ENCODE measurements at regions of chr19 and their contacts with region 1.

Region 1: DNA sequence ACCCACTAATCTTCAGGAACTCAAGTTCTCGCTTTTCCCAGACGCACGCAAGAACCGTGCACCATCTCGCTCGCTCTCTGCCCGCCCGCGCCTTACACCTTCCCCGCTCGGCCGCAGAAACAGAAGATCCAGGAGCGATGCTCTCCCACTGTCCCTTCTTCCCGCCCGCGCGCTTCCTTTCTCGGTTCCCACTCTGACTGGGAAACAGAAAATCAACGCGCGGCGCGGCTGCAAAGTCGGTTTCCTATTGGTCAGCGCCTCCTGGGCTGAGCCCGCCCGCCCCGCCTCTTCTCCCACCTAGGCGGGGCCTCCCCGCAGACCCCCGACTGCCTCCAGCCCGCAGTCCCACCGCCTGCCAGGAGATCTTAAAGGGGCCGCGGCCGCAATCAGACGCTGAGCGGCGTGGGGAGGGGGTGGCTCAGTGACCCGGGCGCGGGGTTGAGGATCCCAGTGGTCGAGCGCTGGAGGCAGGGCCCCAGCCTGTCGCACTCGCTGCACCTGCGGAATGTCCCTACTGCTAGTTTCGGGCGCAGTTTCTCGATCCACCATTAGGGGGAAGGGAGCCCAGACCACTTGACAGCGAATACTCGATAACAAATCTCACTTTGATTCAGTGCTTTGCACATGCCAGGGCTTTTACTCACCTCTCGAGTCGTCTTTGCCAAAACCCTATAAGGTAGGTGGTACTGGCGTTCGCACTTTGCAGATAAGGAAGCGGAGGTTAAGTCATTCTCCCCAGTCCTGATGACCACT is 685 bp upstream of the SLC25A23 start:
- DNase-seq: peak; percentile 97
- H3K4me3 ChIP-seq: peak overlapping the region; percentile 70 to 85 (median 78)
- H3K27ac ChIP-seq: peak overlapping the region; percentile 83 to 93 (median 88)
- H3K4me1 ChIP-seq: peaks cover 0 to 31% (median 22%) of the 10 kb centered on the region in 4 donors
- H3K27me3 ChIP-seq: peaks cover 10 to 25% (median 18%) of the 10 kb centered on the region in 3 donors
- CTCF ChIP-seq: peak; percentile 45 to 81 (median 72)
- EP300 ChIP-seq: no peak
- POLR2A ChIP-seq: peak in 1 of 2 donors; percentile 22

Region 2: DNA sequence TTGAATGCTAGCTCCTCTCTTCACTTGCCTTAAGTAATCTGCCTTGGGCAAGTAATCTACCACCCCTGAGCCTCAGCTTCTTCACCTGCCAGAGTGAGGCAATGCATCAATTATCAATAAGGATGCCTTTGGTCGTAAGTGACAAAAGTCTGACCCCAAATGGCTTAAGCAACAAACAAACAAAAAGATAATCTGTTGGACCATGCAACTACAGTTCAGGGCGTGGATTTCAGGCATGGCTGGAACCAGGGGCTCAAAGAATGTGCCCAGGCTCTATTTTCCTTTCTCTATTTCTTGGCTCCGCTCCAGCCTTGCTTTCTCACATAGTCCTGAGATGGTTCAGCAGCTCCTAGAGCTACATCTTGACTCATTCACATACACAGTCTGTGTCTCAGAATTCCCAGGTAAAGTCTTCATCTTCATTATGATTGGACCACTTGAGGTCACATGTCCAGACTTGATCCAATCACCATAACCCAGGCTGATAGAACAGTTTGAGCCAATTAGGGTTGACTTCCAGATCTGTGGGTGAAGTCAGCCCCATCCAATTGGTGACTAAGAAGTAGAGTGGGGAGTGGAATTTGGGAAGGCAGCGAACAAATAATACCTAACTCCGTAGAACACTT is 295.3 kb before region 1 on chr19:
- intact Hi-C with region 1: no loop called
- DNase-seq: no peak
- H3K4me3 ChIP-seq: no peak overlapping the region
- H3K27ac ChIP-seq: no peak overlapping the region
- H3K4me1 ChIP-seq: no peaks in the 10 kb centered on the region
- H3K27me3 ChIP-seq: no peaks in the 10 kb centered on the region
- CTCF ChIP-seq: no peak
- EP300 ChIP-seq: no peak
- POLR2A ChIP-seq: no peak

Region 3: GRCh38 chr19:6318772-6319171 is 141.5 kb before region 1 on chr19:
- intact Hi-C with region 1: no loop called
- DNase-seq: no peak
- H3K4me3 ChIP-seq: no peak overlapping the region
- H3K27ac ChIP-seq: no peak overlapping the region
- H3K4me1 ChIP-seq: no peaks in the 10 kb centered on the region
- H3K27me3 ChIP-seq: peaks cover 0 to 23% (median 4%) of the 10 kb centered on the region in 3 donors
- CTCF ChIP-seq: no peak
- EP300 ChIP-seq: no peak
- POLR2A ChIP-seq: no peak

Region 4: DNA sequence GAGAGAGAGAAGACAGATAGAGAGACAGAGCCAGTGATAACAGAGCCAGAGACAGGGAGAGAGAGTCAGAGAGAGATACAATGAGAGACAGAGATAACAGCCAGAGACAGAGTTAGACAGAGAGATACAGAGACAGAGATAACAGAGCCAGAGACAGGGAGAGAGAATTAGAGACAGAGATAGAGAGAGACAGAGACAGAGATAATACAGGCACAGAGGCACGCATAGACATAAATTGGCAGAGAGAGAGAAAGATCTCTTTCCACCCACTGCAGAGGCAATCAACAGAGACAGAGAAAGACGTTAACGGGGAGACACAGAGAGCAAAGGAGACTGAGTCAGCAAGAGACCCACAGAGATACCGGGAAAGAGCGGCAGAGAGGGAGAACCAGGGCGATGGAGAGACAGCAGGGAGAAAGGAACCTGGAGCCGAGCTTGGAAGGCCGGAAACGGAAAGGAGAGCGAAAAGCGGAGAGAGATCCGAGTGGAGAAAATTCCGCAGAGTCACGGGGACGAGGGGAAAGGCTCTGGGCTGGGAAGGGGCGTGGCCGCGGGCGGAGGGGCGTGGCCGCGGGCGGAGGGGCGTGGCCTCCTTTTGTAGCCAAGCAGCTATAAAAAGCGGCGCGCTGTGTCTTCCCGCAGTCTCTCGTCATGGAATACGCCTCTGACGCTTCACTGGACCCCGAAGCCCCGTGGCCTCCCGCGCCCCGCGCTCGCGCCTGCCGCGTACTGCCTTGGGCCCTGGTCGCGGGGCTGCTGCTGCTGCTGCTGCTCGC is 70.3 kb after region 1 on chr19 and contains the start of gene TNFSF9:
- intact Hi-C with region 1: loop called (anchors 5 kb)
- DNase-seq: peak; percentile 95
- H3K4me3 ChIP-seq: peak within 1 kb of the TSS; percentile 36 to 60 (median 50)
- H3K27ac ChIP-seq: peak within 1 kb of the TSS; percentile 46 to 74 (median 62)
- H3K4me1 ChIP-seq: peaks cover 0 to 38% (median 10%) of the 10 kb centered on the region in 4 donors
- H3K27me3 ChIP-seq: peaks cover 8 to 35% (median 33%) of the 10 kb centered on the region in 3 donors
- CTCF ChIP-seq: no peak
- EP300 ChIP-seq: peak in 1 of 4 donors; percentile 27
- POLR2A ChIP-seq: peak in 1 of 2 donors; percentile 37
- total RNA-seq, gene TNFSF9: 0.16 to 1.8 (median 0.36) TPM in 3 of 4 donors, not detected in the other

Region 5: GRCh38 chr19:6551607-6552450 is 91.6 kb after region 1 on chr19:
- intact Hi-C with region 1: no loop called
- DNase-seq: no peak
- H3K4me3 ChIP-seq: no peak overlapping the region
- H3K27ac ChIP-seq: no peak overlapping the region
- H3K4me1 ChIP-seq: no peaks in the 10 kb centered on the region
- H3K27me3 ChIP-seq: peaks cover 0 to 7% (median 0%) of the 10 kb centered on the region in 3 donors
- CTCF ChIP-seq: no peak
- EP300 ChIP-seq: no peak
- POLR2A ChIP-seq: no peak